GM10248 (cell line): ENCODE measurements at regions of chr1 and their contacts with region 1.

Region 1: DNA sequence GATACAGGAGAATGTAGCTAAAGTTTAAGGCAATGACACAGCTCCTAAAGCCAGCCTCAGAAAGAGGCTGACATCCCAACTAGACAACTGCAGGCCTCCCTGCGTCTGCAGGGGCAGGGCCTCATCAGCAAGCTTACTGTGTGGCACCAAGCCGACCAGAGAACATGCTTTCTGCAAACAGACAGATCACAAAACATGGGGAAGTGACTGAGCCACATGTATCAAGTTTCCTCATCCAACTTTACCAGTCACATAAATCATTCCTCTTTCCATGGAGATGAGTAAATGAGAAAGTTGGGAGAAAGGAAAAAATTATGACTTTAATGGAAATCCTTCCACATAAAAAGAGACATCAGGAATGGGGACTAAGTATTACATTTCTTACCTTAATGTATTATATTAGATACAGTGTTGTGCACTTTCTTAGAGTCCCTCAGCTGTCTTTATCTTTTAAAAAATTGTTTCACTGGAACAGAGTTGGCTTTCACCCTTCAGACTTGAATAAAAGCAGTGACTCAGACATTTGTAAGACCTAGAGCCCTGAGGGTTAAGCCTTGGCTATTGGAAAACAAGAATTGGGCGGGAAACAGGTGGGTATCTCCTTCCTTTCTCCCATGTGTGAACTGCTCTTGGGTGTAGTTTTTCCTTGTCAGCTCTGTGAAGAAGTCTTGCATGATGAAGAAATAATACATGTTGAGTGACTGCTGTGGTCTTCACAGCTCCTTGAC is 305.7 kb upstream of the SNX7 start:
- DNase-seq: no peak
- CTCF ChIP-seq: no peak

Region 2: GRCh38 chr1:98367426-98367825 is 11.6 kb after region 1 on chr1:
- CTCF ChIA-PET with region 1: interaction called, 10 read pairs
- POLR2A ChIA-PET with region 1: no interaction called
- DNase-seq: no peak
- CTCF ChIP-seq: no peak

Region 3: DNA sequence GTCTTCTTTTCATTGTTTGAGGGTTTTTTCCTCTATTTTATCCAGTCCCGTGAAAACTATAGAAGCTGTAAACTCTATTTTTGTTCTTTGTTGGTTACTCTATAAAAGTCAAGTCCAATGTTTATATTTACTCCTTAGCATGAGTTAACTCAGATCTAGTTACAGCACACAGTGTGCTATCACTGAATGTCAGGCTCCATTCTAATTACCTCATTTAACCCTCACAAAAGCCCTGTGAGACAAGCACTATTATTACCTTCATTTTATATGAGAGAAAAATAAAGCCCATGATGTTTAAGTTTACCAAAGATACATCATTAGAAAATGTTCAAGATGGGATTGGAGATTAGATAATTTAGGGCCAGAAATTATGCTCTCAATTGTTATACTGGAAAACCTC is 54.3 kb after region 1 on chr1:
- CTCF ChIA-PET with region 1: no interaction called
- POLR2A ChIA-PET with region 1: no interaction called
- DNase-seq: no peak
- CTCF ChIP-seq: no peak